Natural killer cell (primary cell): ENCODE measurements at regions of chr1 and their contacts with region 1.

Region 1: GRCh38 chr1:184866991-184867788 is 107.1 kb downstream of the NIBAN1 start:
- DNase-seq: peak; percentile 54 to 81
- ATAC-seq: peak; percentile 86 to 91 (median 90)
- H3K4me3 ChIP-seq: no peak overlapping the region
- H3K4me3 Mint-ChIP-seq: peak overlapping the region; percentile 82
- H3K27ac ChIP-seq: peak overlapping the region; percentile 83
- H3K27ac Mint-ChIP-seq: peak overlapping the region; percentile 88 to 90
- H3K4me1 ChIP-seq: peaks cover 12% of the 10 kb centered on the region
- H3K4me1 Mint-ChIP-seq: peaks cover 28 to 32% of the 10 kb centered on the region in 2 donors
- H3K27me3 ChIP-seq: no peaks in the 10 kb centered on the region
- H3K27me3 Mint-ChIP-seq: no peaks in the 10 kb centered on the region
- CTCF ChIP-seq: no peak

Region 2: DNA sequence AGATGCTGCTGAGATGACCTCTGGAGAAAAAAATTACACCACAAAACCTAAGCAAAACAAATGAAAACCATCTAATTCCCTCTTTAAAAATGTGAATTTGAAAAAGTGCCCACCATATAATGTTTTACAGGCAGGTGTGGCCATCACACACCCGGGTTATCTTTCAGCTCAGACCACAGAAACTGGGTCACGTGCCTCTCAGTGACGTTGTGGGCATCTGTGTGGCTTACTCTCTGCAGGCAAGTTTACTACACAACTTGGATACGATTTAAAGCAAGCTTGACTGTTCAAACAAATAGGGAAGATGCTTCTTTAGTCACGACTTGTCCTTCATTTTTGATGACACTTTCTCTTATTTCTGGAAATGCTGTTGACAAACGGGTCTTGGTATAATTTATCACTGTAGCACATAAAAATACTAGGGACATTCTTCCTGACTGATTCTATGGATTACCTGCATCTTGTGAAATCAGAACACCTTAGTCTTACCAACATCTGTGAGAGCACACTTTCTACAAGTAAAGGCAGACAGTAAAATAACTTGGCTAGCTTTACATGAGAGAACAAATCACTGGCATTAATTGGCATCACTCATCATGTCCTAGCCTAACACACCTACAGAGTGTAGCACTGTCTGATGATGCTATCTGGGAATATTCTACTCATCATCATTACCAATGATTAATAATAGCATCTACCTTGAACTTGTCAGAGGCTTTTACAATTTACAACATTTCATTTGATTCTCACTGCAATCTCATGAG is 23.3 kb before region 1 on chr1:
- intact Hi-C with region 1: loop called (anchors 1 kb)
- DNase-seq: peak; percentile 66 to 88
- ATAC-seq: peak; percentile 51 to 71 (median 65)
- H3K4me3 ChIP-seq: no peak overlapping the region
- H3K4me3 Mint-ChIP-seq: peak overlapping the region; percentile 54
- H3K27ac ChIP-seq: peak overlapping the region; percentile 61
- H3K27ac Mint-ChIP-seq: peak overlapping the region; percentile 80 to 84
- H3K4me1 ChIP-seq: peaks cover 22% of the 10 kb centered on the region
- H3K4me1 Mint-ChIP-seq: peaks cover 32 to 38% of the 10 kb centered on the region in 2 donors
- H3K27me3 ChIP-seq: no peaks in the 10 kb centered on the region
- H3K27me3 Mint-ChIP-seq: no peaks in the 10 kb centered on the region
- CTCF ChIP-seq: no peak

Region 3: GRCh38 chr1:184892116-184892515 is 24.9 kb after region 1 on chr1:
- intact Hi-C with region 1: loop called (anchors 1 kb)
- DNase-seq: peak in 1 of 2 donors; percentile 47
- ATAC-seq: peak in 2 of 3 donors; percentile 14 to 38
- H3K4me3 ChIP-seq: no peak overlapping the region
- H3K4me3 Mint-ChIP-seq: no peak overlapping the region
- H3K27ac ChIP-seq: peak overlapping the region; percentile 6
- H3K27ac Mint-ChIP-seq: peak overlapping the region in 1 of 2 donors; percentile 90
- H3K4me1 ChIP-seq: peaks cover 5% of the 10 kb centered on the region
- H3K4me1 Mint-ChIP-seq: peaks cover 17 to 19% of the 10 kb centered on the region in 2 donors
- H3K27me3 ChIP-seq: no peaks in the 10 kb centered on the region
- H3K27me3 Mint-ChIP-seq: no peaks in the 10 kb centered on the region
- CTCF ChIP-seq: no peak

Region 4: DNA sequence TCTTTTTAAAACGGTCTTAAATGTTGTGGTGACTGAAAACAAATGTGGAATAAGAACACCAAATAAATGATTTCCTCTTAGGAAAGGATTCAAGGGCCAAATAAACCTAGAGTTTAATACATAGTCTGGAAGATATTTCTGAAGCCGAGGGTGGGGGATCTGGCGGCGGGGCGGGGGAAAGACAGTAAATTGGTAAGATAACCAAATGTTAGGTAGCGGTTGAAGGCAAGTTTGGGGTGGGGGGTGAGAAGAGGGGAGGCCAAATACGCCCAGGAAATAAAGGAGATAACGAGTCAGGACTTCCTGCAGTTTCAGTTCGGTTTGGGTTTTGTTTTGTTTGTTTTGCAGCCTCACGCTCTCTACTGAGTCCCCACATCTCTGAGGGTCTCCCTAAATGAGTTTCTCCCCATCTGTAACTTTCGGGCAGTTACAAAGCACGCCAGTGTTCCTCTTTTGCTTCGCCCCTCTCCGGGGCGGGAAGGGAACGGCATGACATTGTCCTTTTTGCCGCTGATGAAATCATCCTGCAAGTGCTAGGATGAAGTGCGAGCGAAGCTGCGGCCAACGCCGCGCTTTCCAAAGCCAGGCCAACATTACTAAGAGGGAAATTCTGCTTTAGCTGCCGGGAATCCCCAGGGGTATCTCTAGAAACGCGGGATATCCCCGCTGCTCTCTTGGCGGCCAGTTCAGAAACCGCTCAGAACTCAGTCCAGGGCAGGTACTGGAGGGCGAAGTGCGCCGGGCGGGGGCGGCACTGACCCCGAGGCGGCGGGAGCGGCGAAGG is 106.3 kb after region 1 on chr1:
- intact Hi-C with region 1: loop called (anchors 1 kb)
- DNase-seq: peak in 1 of 2 donors; percentile 87
- ATAC-seq: peak; percentile 70 to 77 (median 74)
- H3K4me3 ChIP-seq: peak overlapping the region; percentile 64
- H3K4me3 Mint-ChIP-seq: peak overlapping the region; percentile 93
- H3K27ac ChIP-seq: peak overlapping the region; percentile 80
- H3K27ac Mint-ChIP-seq: peak overlapping the region; percentile 37 to 63
- H3K4me1 ChIP-seq: peaks cover 25% of the 10 kb centered on the region
- H3K4me1 Mint-ChIP-seq: peaks cover 43 to 55% of the 10 kb centered on the region in 2 donors
- H3K27me3 ChIP-seq: no peaks in the 10 kb centered on the region
- H3K27me3 Mint-ChIP-seq: no peaks in the 10 kb centered on the region
- CTCF ChIP-seq: no peak